ENCODE measurements at regions of chr3 and their contacts with region 1.

Region 1: DNA sequence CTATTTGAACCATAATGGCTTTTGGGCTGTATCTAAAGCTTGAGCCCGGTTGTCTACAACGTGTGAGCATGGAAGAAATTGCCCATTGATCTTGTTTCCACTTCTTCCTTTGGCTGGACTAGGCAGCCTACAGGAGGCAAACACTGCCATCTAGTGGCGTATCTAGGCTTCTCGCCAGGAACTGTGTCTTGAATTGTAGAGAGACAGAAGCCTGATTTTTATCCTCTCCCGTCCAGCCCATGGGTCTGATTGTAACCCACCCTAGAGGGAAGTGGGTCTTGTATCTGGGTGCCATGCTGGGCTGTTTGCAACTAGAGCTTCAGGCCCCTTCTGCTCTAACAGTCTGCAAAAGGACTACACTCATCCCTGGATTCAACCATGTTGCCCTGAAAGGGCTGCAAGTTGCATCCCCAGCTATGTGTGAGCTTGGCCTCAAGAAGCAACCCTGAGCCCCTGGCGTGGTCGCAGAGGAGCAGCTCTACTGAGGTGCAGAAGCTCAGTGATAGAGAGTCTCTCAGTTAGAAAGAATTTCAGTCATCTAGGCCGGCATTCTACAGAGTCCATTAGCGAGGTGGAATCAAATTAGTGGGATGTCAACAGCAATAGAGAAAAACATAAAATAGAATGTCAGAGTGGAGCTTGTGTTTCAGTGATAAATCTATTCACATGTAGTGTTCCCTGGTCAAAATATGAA is 170.2 kb upstream of the UMPS start:
- DNase-seq: peak; percentile 72
- ATAC-seq: peak; percentile 74
- H3K4me3 Mint-ChIP-seq: no peak overlapping the region
- H3K27ac Mint-ChIP-seq: no peak overlapping the region
- H3K4me1 Mint-ChIP-seq: no peaks in the 10 kb centered on the region
- H3K27me3 Mint-ChIP-seq: peaks cover 69% of the 10 kb centered on the region

Region 2: DNA sequence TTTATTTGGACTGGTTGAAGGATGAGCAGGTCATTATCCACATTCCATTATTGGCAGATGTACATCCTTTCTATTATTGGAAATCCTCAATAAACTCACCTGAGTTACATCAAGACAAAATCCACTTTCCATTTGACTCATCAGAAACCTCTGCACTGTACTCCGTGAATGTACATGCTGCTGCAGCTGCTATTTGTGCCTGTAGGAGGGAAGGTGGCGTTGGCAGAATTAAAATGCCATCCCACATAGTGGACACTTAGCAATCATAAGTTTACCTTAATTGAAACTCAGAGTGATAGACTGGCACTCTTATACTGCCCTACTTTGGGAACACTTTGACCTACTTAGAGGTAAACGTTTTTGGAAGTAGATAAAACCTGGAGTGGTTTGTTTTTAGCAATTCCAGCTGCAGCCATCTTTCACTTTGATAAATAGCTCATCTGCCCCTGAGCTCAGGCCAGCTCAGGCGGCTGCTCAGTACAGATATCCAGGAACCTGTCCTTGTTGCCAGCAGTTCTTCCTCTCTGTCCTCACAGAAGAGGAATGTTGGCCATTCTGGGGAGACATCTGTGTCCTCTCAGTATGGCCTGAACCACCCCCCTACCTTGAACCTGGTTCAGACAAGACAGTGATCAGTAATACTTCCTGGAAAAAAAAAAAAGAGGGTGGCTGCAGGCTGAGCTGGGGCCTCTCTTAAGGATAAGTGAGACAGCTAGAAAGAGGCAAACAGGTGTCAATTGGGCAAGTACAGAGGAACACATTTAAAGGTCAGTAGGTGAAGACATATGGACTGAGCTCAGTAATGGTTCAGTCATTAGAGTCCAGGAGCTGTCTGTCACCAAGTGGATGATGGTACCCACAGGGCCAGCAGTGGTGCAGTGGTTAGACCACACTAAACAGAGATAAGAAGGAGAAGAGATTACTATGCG is 16.8 kb after region 1 on chr3:
- CTCF ChIA-PET with region 1: interaction called, 11 read pairs
- DNase-seq: no peak
- ATAC-seq: no peak
- H3K4me3 Mint-ChIP-seq: no peak overlapping the region
- H3K27ac Mint-ChIP-seq: no peak overlapping the region
- H3K4me1 Mint-ChIP-seq: peaks cover 16% of the 10 kb centered on the region
- H3K27me3 Mint-ChIP-seq: peaks cover 26% of the 10 kb centered on the region

Region 3: DNA sequence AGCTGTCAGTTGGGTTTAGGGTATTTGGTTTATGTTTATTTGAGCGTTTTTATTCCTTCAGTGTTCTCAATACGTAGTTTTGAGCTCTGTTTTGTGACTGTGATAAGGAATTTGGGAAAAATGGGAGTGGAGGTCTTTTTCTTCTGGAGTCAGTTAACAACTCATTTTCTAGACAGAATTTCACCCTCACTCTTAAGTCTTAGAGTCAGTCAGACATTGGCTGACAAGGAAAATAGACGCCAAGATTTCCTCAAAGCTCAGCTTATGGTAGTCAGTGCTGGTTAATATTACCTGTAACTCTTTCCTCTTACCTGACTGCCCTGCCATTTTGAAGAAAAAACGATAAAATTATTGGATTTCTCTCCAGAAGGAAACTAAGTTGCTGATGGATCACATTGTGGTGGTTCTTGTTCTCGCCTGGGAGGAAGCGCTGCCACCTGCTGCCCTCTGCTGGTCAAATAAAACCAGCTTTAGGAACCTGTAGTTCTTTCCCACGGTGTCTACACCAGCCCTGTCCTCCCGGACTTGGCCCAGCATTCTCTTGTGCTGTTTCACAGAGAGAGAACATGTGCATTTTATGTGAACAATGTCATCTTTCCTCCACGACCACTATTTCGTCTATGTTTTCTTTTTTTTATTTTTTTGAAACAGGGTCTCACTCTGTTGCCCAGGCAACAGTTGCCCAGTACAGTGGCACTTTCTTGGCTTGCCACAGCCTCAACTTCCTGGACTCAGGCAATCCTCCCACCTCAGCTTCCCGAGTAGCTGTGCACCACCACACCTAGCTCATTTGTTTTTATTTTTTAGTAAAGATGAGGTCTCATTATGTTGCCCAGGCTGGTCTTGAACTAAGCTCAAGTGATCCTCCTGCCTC is 128.8 kb after region 1 on chr3:
- CTCF ChIA-PET with region 1: interaction called, 178 read pairs
- DNase-seq: peak; percentile 81
- ATAC-seq: peak; percentile 82
- H3K4me3 Mint-ChIP-seq: no peak overlapping the region
- H3K27ac Mint-ChIP-seq: no peak overlapping the region
- H3K4me1 Mint-ChIP-seq: peaks cover 3% of the 10 kb centered on the region
- H3K27me3 Mint-ChIP-seq: peaks cover 47% of the 10 kb centered on the region